H1 (cell line): ENCODE measurements at regions of chr2 and their contacts with region 1.

Region 1: GRCh38 chr2:80238692-80239469 is 65.7 kb downstream of the LRRTM1 start:
- DNase-seq: peak in 1 of 2 experiments; percentile 80
- H3K4me3 ChIP-seq: no peak overlapping the region
- H3K27ac ChIP-seq: no peak overlapping the region
- H3K4me1 ChIP-seq: no peaks in the 10 kb centered on the region
- H3K27me3 ChIP-seq: no peaks in the 10 kb centered on the region
- CTCF ChIP-seq: peak; percentile 54 to 79 (median 64)
- EP300 ChIP-seq: no peak
- POLR2A ChIP-seq: no peak
- RAD21 ChIP-seq: peak; percentile 41 to 65

Region 2: DNA sequence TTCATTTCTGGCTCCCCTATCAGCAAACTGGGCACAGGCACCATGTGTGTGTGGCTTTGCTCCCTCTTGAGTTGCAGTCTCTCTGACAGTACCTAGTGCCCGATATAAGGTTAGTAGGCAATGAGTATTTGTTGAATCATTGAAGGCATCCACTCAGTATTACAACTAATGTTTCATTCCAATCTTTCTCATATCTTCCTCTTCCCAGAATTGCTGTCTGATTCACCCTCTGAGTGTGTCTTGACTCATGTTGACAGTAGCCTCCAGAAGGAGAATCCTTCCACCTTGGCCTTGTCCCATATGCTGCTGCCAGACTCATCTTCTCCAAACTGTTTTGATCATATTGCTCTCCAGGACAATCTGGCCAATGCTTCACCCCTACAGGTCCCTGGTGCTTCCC is 136.9 kb before region 1 on chr2:
- CTCF ChIA-PET with region 1: no interaction called
- POLR2A ChIA-PET with region 1: no interaction called
- DNase-seq: no peak
- H3K4me3 ChIP-seq: no peak overlapping the region
- H3K27ac ChIP-seq: no peak overlapping the region
- H3K4me1 ChIP-seq: no peaks in the 10 kb centered on the region
- H3K27me3 ChIP-seq: no peaks in the 10 kb centered on the region
- CTCF ChIP-seq: no peak
- EP300 ChIP-seq: no peak
- POLR2A ChIP-seq: no peak
- RAD21 ChIP-seq: no peak

Region 3: GRCh38 chr2:80145499-80145898 is 93.4 kb before region 1 on chr2:
- CTCF ChIA-PET with region 1: interaction called, 15 read pairs
- POLR2A ChIA-PET with region 1: no interaction called
- DNase-seq: no peak
- H3K4me3 ChIP-seq: no peak overlapping the region
- H3K27ac ChIP-seq: no peak overlapping the region
- H3K4me1 ChIP-seq: no peaks in the 10 kb centered on the region
- H3K27me3 ChIP-seq: no peaks in the 10 kb centered on the region
- CTCF ChIP-seq: no peak
- EP300 ChIP-seq: no peak
- POLR2A ChIP-seq: no peak
- RAD21 ChIP-seq: no peak

Region 4: GRCh38 chr2:80205498-80205897 is 33.4 kb before region 1 on chr2:
- CTCF ChIA-PET with region 1: interaction called, 14 read pairs
- POLR2A ChIA-PET with region 1: no interaction called
- DNase-seq: no peak
- H3K4me3 ChIP-seq: no peak overlapping the region
- H3K27ac ChIP-seq: no peak overlapping the region
- H3K4me1 ChIP-seq: no peaks in the 10 kb centered on the region
- H3K27me3 ChIP-seq: peaks cover 0 to 1% (median 0%) of the 10 kb centered on the region in 4 experiments; a peak in 1 of 7 replicates
- CTCF ChIP-seq: no peak
- EP300 ChIP-seq: no peak
- POLR2A ChIP-seq: no peak
- RAD21 ChIP-seq: no peak

Region 5: DNA sequence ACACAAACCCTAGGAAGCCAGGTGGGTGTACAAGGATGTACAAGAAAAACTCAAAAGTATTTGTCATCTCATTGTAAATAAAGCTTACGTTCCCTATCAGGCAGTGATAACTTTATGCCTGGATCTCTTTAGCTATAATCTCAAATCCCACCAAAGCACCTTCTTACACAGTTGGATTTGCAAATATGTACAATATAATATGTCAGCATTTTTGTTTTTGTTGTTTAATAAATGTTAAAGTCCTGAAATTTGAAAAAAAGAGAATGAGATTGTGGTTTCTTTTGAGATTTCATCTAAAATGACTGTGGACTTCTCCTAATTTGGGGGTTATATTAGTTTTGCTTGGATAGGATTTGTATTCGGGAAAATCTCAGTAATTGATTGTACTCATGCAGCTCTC is 16.2 kb before region 1 on chr2:
- CTCF ChIA-PET with region 1: interaction called, 60 read pairs
- POLR2A ChIA-PET with region 1: no interaction called
- DNase-seq: no peak
- H3K4me3 ChIP-seq: no peak overlapping the region
- H3K27ac ChIP-seq: no peak overlapping the region
- H3K4me1 ChIP-seq: no peaks in the 10 kb centered on the region
- H3K27me3 ChIP-seq: no peaks in the 10 kb centered on the region
- CTCF ChIP-seq: no peak
- EP300 ChIP-seq: no peak
- POLR2A ChIP-seq: no peak
- RAD21 ChIP-seq: no peak

Region 6: GRCh38 chr2:80610108-80610507 is 371.2 kb after region 1 on chr2:
- CTCF ChIA-PET with region 1: no interaction called
- POLR2A ChIA-PET with region 1: no interaction called
- DNase-seq: no peak
- H3K4me3 ChIP-seq: no peak overlapping the region
- H3K27ac ChIP-seq: no peak overlapping the region
- H3K4me1 ChIP-seq: no peaks in the 10 kb centered on the region
- H3K27me3 ChIP-seq: no peaks in the 10 kb centered on the region
- CTCF ChIP-seq: no peak
- EP300 ChIP-seq: no peak
- POLR2A ChIP-seq: no peak
- RAD21 ChIP-seq: no peak